ENCODE measurements at regions of chr2 and their contacts with region 1.

Region 1: GRCh38 chr2:161946489-161947107 is 127.4 kb downstream of the DPP4 start:
- DNase-seq: no peak
- ATAC-seq: no peak

Region 2: DNA sequence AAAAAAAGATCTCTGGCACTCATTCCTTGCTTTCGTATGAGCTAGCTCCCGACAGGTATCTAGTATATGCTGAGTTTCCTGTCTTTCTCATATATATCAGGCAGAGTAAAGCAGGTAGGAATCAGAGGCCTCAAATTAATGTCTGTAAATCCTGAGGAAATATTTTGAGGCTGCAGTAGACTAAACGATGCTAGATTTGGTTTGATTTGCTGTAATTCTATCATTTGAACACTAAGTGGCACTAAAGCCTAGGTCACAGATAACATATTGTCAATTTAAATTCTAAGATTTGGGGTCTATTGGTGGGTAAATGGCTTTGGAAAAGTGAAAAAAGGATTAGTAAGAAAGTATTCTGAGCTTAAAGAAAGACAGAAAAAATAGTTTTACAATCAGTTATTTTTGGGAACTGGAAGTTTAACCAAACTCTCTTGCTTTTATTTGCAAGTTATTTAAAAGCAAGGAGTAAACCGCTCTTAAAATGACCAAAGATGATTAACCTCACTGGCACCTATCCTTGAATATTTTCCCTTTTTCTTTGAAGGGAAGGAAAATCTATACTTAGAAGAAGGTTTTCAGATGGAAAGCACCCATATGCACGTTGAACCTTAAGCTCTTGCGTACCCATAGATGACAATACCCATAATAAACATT is 360.0 kb before region 1 on chr2:
- intact Hi-C with region 1: loop called (anchors 5 kb)
- DNase-seq: no peak
- ATAC-seq: no peak

Region 3: GRCh38 chr2:162475661-162476060 is 529.1 kb after region 1 on chr2:
- intact Hi-C with region 1: no loop called
- DNase-seq: no peak
- ATAC-seq: no peak

Measured in Right ventricle myocardium inferior (tissue), 1 donor.